Activated CD4-positive, alpha-beta memory T cell treated with anti-CD3 and anti-CD28 coated beads for 36 hours (primary cell): ENCODE measurements at regions of chr10 and their contacts with region 1.

Region 1: DNA sequence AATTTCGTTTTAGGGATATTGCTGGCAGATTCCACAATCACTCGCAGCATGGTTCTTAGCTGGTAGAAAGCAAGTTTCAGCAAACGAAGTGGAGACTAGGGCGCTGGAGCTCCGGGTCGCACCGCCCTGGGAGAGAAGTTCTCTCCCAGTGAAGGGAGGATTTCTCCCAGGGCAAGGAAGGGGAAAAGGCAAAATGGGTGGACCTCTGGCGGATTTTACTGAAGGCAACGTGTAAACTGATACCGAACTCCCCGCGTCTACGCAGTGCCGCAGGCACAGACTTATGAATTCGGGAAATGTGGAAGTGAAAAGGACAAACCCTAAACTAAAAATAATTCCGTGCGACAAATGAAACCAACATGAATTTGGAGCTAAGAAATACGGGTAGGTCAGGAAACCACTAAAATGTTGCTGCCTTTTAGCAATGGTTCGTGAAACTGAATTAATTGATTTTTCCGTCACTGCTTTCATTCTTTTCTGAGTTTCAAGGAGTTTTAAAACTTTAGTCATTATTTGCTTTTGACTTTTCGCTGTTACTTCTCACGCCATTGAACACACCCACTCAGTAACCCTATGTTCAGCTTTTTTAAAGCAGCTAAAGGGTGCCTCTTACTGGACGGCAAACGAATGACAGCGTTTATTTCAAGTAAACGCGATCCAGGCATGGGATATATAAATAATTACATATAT is at the start of gene MYOF:
- DNase-seq: peak; percentile 65
- H3K4me3 Mint-ChIP-seq: peak within 1 kb of the TSS; percentile 88
- H3K27ac Mint-ChIP-seq: peak within 1 kb of the TSS; percentile 88
- H3K4me1 Mint-ChIP-seq: peaks cover 23% of the 10 kb centered on the region
- H3K27me3 Mint-ChIP-seq: peaks cover 3% of the 10 kb centered on the region
- total RNA-seq, gene MYOF: 49.3 to 49.7 TPM

Region 2: DNA sequence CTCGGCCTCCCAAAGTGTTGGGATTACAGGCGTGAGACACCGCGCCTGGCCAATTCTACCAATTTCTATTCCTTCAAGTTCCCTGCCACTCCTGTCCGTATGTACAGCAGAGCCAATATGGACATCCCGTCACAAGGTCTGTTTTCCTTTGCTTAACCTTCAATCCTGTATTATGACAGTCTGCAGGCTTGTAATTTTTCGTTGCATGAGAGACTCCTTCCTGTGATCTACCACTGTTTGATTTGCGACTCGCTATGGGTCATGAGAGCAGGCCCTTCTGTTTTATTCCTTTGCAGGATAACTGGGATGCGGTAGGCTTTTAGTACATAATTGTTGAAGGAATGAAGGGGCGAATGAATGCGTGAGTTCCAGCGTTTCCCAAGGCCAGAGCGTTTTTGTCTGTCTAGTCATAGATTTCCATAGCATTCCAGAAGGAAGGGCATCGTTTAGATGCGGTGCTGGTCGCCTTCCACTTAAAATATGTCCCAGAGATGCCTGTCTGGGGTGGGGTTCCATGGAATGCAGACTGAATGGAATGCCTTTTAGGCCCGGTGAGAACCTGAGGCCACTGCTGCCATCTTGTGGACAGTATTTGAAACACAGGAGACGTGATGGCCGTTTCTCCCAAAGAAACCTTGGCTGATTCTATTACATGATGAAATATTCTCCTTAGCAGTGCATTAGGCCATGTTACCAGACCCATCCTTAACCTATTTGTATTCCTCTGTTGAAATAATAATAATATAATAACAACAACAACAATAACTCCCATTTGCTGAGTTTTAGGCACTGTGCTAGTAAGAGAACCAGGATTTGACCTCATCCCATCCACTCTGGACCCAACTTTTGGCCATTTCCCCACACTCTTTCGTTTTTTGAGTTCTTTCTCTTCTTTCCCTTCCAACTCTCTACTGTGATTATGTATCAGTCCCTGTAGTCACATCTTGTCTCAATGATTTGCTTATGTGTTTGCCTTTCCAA is 193.3 kb before region 1 on chr10:
- CTCF ChIA-PET with region 1: interaction called, 11 read pairs
- POLR2A ChIA-PET with region 1: no interaction called
- intact Hi-C with region 1: no loop called
- DNase-seq: peak; percentile 61
- H3K4me3 Mint-ChIP-seq: no peak overlapping the region
- H3K27ac Mint-ChIP-seq: no peak overlapping the region
- H3K4me1 Mint-ChIP-seq: no peaks in the 10 kb centered on the region
- H3K27me3 Mint-ChIP-seq: no peaks in the 10 kb centered on the region

Region 3: GRCh38 chr10:93368210-93368609 is 114.1 kb before region 1 on chr10:
- CTCF ChIA-PET with region 1: interaction called, 26 read pairs
- POLR2A ChIA-PET with region 1: interaction called, 6 read pairs
- intact Hi-C with region 1: no loop called
- DNase-seq: no peak
- H3K4me3 Mint-ChIP-seq: no peak overlapping the region
- H3K27ac Mint-ChIP-seq: no peak overlapping the region
- H3K4me1 Mint-ChIP-seq: peaks cover 4% of the 10 kb centered on the region
- H3K27me3 Mint-ChIP-seq: no peaks in the 10 kb centered on the region

Region 4: DNA sequence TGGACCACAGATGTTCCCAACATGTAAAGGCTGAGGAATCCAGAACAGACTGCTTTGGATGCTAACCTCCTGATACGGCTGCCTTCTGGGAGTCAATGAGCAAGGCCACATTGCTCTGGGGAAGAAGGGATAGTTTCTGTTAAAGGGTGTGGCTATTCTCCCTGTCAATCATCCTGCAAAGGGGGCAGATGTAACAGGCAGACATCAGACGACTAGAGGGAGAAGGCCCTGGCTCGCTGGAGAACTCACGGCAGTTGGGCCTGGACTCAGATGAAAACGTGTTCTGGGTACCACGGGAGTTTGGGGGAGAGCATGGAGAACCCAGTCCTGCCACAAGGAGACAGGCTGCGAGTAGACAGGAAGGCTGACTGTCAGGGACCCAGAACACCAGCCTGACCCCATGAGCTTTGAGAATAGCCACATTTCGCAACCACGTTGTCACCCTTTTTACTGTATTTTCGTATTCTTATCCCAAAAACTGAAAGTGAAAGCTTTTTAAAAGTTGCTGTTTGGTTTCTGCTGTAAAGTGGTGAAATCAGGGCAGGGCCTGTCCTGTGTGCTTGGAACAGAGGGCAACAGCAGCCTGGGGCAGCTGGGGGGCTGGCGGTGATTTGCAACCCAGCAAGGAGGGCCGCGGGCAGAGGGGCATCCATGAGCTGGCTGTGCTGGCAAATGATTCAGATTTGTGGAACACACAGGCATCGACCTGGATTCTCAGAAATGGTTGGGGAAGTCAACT is 95.5 kb before region 1 on chr10:
- CTCF ChIA-PET with region 1: interaction called, 21 read pairs
- POLR2A ChIA-PET with region 1: interaction called, 3 read pairs
- intact Hi-C with region 1: no loop called
- DNase-seq: peak; percentile 34
- H3K4me3 Mint-ChIP-seq: no peak overlapping the region
- H3K27ac Mint-ChIP-seq: peak overlapping the region; percentile 78
- H3K4me1 Mint-ChIP-seq: peaks cover 22% of the 10 kb centered on the region
- H3K27me3 Mint-ChIP-seq: no peaks in the 10 kb centered on the region

Region 5: DNA sequence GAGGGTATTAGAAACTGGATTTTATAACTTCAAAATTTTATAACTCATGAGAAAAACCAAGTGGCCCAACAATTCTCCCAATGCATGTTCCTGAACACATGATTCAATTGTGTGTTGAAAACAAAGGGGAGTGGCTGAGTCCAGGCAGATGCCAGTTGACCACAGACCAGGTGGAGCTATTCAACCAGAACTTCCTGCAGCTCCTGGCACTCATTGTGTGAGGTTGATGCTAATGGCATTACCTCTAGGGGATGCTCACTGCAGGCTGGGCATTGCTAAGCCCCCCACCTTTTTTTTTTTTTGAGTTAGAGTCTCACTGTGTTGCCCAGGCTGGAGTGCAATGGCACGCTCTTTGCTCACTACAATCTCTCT is 20.5 kb before region 1 on chr10:
- CTCF ChIA-PET with region 1: interaction called, 38 read pairs
- POLR2A ChIA-PET with region 1: interaction called, 24 read pairs
- intact Hi-C with region 1: loop called (anchors 1 kb)
- DNase-seq: no peak
- H3K4me3 Mint-ChIP-seq: no peak overlapping the region
- H3K27ac Mint-ChIP-seq: peak overlapping the region; percentile 86
- H3K4me1 Mint-ChIP-seq: peaks cover 35% of the 10 kb centered on the region
- H3K27me3 Mint-ChIP-seq: no peaks in the 10 kb centered on the region

Region 6: GRCh38 chr10:93496322-93497041 is 14.2 kb after region 1 on chr10 and contains the start of gene CEP55:
- CTCF ChIA-PET with region 1: interaction called, 45 read pairs
- POLR2A ChIA-PET with region 1: interaction called, 16 read pairs
- intact Hi-C with region 1: loop called (anchors 1 kb)
- DNase-seq: peak; percentile 98
- H3K4me3 Mint-ChIP-seq: peak within 1 kb of the TSS; percentile 90
- H3K27ac Mint-ChIP-seq: peak within 1 kb of the TSS; percentile 74
- H3K4me1 Mint-ChIP-seq: peaks cover 27% of the 10 kb centered on the region
- H3K27me3 Mint-ChIP-seq: no peaks in the 10 kb centered on the region
- total RNA-seq, gene CEP55: 88.0 to 91.3 TPM

Region 7: DNA sequence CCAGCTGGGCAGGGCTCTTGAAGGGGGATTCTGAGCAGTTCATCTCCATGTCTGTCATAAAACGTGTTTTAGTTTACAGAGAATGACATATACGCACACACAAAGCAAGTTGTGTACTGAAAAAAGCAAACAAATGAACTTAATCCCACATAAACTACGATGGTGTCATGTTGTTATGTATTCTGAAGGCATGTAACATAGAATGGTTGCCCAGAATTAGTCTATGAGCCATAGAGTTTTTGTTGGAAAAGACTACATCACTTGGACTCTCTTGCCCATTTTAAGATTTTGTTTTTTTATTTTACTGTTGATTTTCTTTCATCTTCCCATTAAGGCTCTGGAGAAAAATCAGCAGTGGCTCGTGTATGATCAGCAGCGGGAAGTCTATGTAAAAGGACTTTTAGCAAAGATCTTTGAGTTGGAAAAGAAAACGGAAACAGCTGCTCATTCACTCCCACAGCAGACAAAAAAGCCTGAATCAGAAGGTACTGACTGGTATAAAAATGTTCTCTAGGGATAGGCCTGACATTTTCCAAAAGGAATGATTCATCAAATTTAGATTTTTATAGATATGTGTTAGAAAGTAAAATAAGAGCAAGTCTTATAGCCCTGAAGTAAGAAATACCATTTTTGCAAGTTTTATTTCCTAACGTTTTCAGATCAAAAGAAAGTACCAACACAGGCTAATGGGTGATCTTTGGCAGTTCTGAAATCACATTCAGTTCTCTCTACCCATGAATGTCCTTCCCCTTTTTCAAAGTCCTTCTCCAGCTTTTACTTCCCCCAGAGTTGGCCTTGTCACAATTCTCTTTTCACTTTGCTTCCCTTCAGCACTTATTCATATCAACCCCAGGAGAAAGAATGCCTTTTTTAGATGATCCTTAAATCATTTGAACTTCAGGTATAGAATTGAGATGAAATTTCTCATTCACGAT is 33.0 kb after region 1 on chr10:
- CTCF ChIA-PET with region 1: interaction called, 84 read pairs
- POLR2A ChIA-PET with region 1: no interaction called
- intact Hi-C with region 1: loop called (anchors 1 kb)
- DNase-seq: no peak
- H3K4me3 Mint-ChIP-seq: no peak overlapping the region
- H3K27ac Mint-ChIP-seq: no peak overlapping the region
- H3K4me1 Mint-ChIP-seq: peaks cover 7% of the 10 kb centered on the region
- H3K27me3 Mint-ChIP-seq: no peaks in the 10 kb centered on the region